Cardiac septum (tissue), 1 donor: ENCODE measurements at regions of chr11 and their contacts with region 1.

Region 1: DNA sequence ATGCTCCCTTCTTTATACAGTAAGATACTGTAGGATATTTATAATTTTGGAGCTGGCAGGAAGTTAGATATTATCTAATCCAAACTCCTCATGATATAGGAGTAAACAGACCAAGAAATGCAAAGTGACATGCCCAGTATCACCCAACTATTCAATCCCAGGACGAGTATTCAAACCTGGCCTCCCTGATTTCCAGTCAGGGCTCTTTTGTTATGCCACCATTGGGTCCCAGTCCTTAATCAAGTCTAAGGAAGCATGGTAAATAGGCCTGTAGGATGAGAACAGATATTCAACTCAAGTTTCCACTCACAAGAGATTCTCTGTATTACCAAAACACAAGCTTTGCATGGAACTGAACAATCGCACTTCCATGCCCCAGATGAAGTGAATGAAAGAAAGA is 484.0 kb upstream of the API5 start:
- DNase-seq: no peak

Region 2: GRCh38 chr11:42521994-42522393 is 305.9 kb before region 1 on chr11:
- intact Hi-C with region 1: no loop called
- DNase-seq: no peak

Region 3: GRCh38 chr11:42816471-42816870 is 11.4 kb before region 1 on chr11:
- intact Hi-C with region 1: loop called (anchors 1 kb)
- DNase-seq: no peak